ENCODE measurements at regions of chr11 and their contacts with region 1.

Region 1: DNA sequence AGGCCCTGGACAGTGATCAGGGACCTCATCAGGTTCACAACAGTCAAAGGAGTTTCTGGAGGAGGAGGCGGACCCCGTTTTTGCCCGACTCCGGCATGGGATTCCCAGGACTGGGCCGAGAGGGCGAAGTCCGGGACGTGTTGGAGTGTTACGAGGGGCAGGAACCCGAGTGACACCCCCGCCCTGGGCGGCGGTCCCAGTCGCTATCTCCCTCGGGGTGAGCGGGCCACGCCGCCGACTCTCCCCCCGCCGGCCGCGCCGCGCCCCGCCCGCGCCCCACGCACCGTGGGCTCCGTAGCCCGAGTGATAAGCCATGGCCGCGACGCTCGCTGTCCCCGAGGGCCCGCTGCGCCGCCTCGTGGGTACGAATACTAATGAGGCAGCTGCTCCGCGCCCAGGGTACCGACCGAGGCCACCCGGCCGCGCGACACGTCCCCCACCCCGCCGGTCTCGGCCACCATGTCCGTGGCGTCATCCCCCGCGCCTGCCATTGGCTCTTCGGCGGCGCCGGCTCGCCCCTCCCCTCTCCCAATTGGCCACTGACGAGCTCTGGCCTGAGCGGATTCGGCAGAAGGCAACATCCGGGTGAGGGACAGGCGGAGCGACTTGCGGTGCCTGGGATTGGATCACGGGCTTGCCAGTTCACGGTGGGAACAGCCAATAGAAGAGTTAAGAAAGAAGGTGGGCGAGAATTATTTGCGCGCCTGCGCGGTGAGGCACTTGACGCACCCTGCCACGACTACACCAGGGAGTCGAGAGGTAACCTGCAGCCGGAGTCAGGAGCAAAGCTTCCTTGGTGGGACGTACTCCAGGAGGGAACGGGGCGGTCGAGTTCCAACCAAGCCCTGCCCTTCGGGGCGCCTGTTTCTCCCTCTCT is at the start of gene YIF1A:
- DNase-seq: peak; percentile 99 to 100
- H3K4me3 ChIP-seq: peak within 1 kb of the TSS; percentile 63
- H3K4me3 Mint-ChIP-seq: peak within 1 kb of the TSS; percentile 87
- H3K27ac Mint-ChIP-seq: peak within 1 kb of the TSS; percentile 94
- H3K4me1 ChIP-seq: peaks cover 23% of the 10 kb centered on the region
- H3K4me1 Mint-ChIP-seq: peaks cover 22% of the 10 kb centered on the region
- H3K27me3 ChIP-seq: no peaks in the 10 kb centered on the region; the same call in 1 of the 2 replicates
- H3K27me3 Mint-ChIP-seq: peaks cover 6% of the 10 kb centered on the region
- CTCF ChIP-seq: peak in 1 of 2 experiments; percentile 25
- total RNA-seq, gene YIF1A: 140 and 159 TPM in 2 replicates

Region 2: GRCh38 chr11:66159324-66159984 is 129.5 kb before region 1 on chr11:
- CTCF ChIA-PET with region 1: interaction called, 10 read pairs
- POLR2A ChIA-PET with region 1: no interaction called
- intact Hi-C with region 1: no loop called
- DNase-seq: no peak
- H3K4me3 ChIP-seq: no peak overlapping the region
- H3K4me3 Mint-ChIP-seq: no peak overlapping the region
- H3K27ac Mint-ChIP-seq: no peak overlapping the region
- H3K4me1 ChIP-seq: peaks cover 51% of the 10 kb centered on the region
- H3K4me1 Mint-ChIP-seq: peaks cover 25% of the 10 kb centered on the region
- H3K27me3 ChIP-seq: no peaks in the 10 kb centered on the region
- H3K27me3 Mint-ChIP-seq: no peaks in the 10 kb centered on the region
- CTCF ChIP-seq: no peak

Region 3: DNA sequence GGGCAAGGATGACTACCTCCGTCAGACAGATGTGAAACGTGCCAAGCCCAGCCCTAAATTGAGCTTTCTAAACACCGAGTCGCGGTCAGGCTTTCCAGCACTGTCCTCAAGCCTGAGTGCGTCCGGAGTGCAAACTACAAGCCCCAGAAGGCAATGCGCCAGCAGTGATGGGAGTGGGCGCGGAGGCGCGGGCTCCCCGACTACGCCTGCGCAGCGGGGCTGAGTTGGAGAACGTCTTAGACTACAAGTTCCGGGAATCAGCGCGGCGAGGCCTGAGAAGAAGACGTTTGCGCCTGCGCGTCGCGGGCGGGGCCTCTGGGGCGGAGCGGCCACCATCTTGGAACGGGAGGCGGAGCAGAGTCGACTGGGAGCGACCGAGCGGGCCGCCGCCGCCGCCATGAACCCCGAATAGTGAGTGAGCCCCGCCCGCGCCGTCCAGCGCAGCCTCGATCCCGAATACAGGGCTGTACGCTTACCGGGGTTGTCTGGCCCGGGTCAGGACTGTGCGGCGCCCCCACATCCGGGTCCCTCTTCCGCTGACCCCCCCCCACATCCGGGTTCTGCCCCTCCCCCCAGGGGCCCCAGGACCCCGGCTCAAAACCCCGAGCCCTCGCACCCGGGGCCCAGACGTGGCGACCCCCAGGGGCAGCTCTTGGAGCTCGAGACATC is 20.5 kb before region 1 on chr11 and contains the start of gene RAB1B:
- CTCF ChIA-PET with region 1: interaction called, 9 read pairs
- POLR2A ChIA-PET with region 1: interaction called, 7 read pairs
- intact Hi-C with region 1: loop called (anchors 1 kb)
- DNase-seq: peak; percentile 100
- H3K4me3 ChIP-seq: peak within 1 kb of the TSS; percentile 78
- H3K4me3 Mint-ChIP-seq: peak within 1 kb of the TSS; percentile 92
- H3K27ac Mint-ChIP-seq: peak within 1 kb of the TSS; percentile 87
- H3K4me1 ChIP-seq: no peaks in the 10 kb centered on the region
- H3K4me1 Mint-ChIP-seq: peaks cover 8% of the 10 kb centered on the region
- H3K27me3 ChIP-seq: no peaks in the 10 kb centered on the region
- H3K27me3 Mint-ChIP-seq: no peaks in the 10 kb centered on the region
- CTCF ChIP-seq: no peak
- total RNA-seq, gene RAB1B: 128 and 132 TPM in 2 replicates

Region 4: DNA sequence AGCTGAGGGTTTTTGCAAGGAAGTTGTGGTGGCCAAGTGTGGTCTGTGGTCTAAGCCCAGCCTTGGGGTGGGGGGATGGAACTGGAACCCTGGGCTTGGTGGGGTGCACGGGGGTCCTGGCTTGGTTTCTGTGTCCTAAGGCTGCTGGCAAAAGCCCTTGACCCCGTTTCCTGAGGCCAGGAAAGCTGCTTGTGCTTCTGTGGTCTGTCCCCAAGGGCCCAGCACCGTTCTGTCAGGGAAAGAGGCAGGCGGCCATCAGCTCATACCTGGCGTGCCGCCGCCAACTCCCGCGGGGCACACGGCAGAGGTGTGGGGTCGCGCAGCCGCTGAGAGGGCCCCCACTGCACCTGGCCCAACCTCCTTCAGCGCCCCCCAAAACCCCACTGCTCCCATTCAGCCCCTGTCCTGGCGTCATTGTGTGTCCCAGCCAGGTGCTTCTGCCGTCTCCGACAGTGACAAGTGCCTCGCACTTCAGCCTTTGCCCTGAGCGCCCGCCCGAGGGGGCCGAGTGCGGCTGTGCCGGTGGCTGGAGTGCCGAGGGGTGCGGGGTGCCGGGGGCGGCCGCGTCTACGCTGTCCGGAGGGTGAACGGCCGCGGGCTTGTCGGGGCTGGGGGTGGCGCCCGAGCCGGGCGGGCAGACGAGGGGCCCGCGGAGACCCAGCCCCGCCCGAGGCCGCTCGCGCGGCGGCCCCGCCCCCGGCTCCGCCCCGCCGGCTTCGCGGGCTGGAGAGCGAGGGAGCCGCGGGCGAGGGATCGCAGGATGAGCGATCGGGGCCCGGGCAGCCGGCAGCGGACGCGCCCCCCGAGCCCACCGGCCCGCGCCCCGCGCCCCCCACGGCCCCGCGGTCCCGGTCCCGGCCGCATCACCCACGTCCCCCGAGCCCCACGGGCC is 11.2 kb before region 1 on chr11 and contains the start of gene CNIH2:
- CTCF ChIA-PET with region 1: interaction called, 3 read pairs
- POLR2A ChIA-PET with region 1: interaction called, 13 read pairs
- intact Hi-C with region 1: no loop called
- DNase-seq: peak; percentile 58 to 82
- H3K4me3 ChIP-seq: peak within 1 kb of the TSS; percentile 56
- H3K4me3 Mint-ChIP-seq: peak within 1 kb of the TSS; percentile 73
- H3K27ac Mint-ChIP-seq: peak within 1 kb of the TSS; percentile 43
- H3K4me1 ChIP-seq: peaks cover 11% of the 10 kb centered on the region
- H3K4me1 Mint-ChIP-seq: peaks cover 26% of the 10 kb centered on the region
- H3K27me3 ChIP-seq: no peaks in the 10 kb centered on the region
- H3K27me3 Mint-ChIP-seq: no peaks in the 10 kb centered on the region
- CTCF ChIP-seq: no peak
- total RNA-seq, gene CNIH2: 4.9 and 6.1 TPM in 2 replicates

Region 5: DNA sequence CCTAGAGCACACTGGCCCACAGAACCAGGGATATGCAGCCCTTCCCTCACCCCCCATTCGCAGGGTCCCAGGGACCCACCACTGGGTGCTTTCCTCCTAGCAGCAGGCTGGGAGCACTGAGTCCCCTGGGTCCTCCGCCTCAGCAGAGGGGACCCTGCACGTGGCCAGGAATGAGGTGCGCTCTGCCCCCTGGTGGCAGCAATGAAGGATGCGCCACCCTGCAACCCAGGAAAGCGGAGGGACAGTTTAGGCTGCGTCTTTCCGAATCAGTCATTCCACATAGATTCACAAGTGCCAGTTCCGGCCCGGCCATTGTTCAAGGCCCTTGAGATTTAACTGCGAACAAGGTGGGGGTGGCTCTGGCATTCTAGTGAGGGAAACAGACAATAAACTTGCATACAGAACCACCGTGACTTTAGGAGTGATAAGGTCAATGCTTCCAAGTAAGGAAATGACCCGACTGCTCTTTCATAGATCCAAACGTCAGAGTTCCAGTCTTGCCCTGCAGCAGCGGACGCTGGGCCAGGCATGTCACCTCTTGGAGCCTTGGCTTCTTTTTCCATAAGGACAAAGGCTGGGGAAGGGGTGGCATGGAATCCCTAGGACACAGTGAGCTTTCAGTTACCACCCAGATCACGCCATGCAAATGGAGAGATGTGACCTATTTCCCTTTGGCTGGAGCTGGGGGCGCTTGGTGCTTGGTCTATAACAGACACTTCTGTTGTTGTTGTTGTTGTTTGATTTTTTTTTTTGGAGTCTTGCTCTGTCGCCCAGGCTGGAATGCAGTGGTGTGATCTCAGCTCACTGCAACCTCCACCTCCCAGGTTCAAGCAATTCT is 39.6 kb after region 1 on chr11:
- CTCF ChIA-PET with region 1: interaction called, 3 read pairs
- POLR2A ChIA-PET with region 1: no interaction called
- intact Hi-C with region 1: loop called (anchors 2 kb)
- DNase-seq: peak; percentile 83 to 89
- H3K4me3 ChIP-seq: no peak overlapping the region
- H3K4me3 Mint-ChIP-seq: peak overlapping the region; percentile 32
- H3K27ac Mint-ChIP-seq: peak overlapping the region; percentile 15
- H3K4me1 ChIP-seq: peaks cover 41% of the 10 kb centered on the region
- H3K4me1 Mint-ChIP-seq: peaks cover 17% of the 10 kb centered on the region
- H3K27me3 ChIP-seq: no peaks in the 10 kb centered on the region
- H3K27me3 Mint-ChIP-seq: no peaks in the 10 kb centered on the region
- CTCF ChIP-seq: peak; percentile 95 to 97

Region 6: DNA sequence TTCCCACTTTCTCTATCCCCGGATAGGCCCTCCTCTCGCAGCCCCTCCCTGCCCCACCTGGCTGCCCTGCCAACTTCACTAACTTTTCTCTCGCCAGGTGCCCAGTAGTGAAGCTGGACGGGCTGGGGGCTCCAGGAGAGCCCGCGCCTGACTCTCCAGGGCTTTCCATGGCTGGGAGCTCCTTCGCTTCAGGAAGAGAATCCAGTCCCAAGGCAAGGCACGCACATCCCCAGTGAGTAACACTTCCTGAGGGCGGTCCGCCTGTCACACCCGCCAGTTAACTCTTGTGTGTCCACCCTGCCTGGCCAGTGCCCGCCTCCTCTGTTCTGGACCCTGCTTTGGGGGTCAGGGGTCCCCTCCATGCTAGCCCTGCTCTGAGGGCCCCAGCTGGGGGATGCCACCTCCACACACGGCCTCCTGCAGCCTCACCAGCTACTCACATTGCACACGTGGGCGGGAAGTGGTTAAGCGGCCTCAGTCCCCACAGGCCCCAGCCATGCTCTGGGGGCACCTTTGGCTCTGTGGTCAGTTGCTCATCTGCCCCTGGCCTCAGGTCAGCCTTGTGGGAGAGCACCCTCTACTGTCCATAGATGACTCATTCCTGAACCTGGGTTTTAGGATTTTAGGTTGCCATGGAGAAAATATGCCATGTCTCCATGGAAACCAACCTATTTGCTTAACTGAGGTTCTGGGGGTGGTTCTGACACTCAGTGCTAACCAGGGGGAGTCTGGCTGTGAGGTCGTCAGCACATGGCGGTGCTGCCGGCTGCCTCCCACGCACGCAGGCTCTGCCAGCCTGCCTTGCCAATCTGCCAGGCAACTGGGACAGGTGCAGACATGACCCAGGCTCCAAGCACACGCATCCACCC is 47.6 kb after region 1 on chr11 and contains the start of gene RIN1:
- CTCF ChIA-PET with region 1: interaction called, 8 read pairs
- POLR2A ChIA-PET with region 1: interaction called, 7 read pairs
- intact Hi-C with region 1: loop called (anchors 1 kb)
- DNase-seq: peak; percentile 87
- H3K4me3 ChIP-seq: peak within 1 kb of the TSS; percentile 69
- H3K4me3 Mint-ChIP-seq: peak within 1 kb of the TSS; percentile 94
- H3K27ac Mint-ChIP-seq: peak within 1 kb of the TSS; percentile 91
- H3K4me1 ChIP-seq: peaks cover 10% of the 10 kb centered on the region
- H3K4me1 Mint-ChIP-seq: peaks cover 7% of the 10 kb centered on the region
- H3K27me3 ChIP-seq: no peaks in the 10 kb centered on the region
- H3K27me3 Mint-ChIP-seq: no peaks in the 10 kb centered on the region
- CTCF ChIP-seq: peak; percentile 52 to 71
- total RNA-seq, gene RIN1: 11.7 and 12.7 TPM in 2 replicates

Region 7: DNA sequence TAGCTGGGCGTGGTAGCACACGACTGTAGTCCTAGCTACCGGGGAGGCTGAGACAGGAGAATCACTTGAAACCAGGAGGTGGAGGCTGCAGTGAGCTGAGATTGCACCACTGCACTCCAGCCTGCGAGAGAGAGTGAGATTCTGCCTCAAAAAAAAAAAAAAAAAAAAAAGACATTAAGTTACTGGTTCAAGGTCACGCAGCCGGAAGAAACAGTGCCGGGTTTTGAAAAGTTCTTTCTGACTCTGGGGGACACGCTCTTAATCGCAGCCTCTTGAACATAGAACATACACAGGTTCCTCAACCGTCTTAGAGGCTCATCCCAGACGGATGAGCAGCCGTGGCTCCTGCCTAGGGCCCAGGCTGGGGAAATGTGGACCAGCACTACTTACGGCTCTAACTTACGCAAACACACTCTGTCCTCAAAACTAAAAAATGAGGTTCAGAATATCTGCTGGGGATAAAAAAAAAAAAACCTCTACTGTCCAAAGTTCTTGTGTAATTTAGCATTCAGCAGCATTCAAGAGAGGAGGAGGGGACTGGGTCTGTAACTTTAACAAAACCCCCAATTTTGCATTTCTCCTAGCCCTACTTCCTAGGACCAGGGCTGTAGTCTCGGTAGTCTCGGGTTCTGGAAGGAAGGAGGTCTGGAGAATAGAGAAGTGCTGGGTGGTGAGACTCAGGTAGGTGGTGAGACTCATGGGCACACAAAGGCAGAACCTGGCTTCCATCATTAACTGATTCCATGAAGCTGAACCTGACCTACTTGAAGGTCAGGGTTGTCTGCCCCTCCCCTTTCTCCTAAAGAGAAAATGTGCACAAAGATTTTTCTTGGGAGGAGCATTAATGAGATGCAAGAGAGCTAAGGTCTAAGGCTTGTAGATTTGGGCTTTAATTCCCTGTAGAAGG is 434.1 kb after region 1 on chr11:
- CTCF ChIA-PET with region 1: no interaction called
- POLR2A ChIA-PET with region 1: no interaction called
- intact Hi-C with region 1: no loop called
- DNase-seq: no peak
- H3K4me3 ChIP-seq: no peak overlapping the region
- H3K4me3 Mint-ChIP-seq: no peak overlapping the region
- H3K27ac Mint-ChIP-seq: no peak overlapping the region
- H3K4me1 ChIP-seq: peaks cover 19% of the 10 kb centered on the region
- H3K4me1 Mint-ChIP-seq: peaks cover 39% of the 10 kb centered on the region
- H3K27me3 ChIP-seq: no peaks in the 10 kb centered on the region
- H3K27me3 Mint-ChIP-seq: no peaks in the 10 kb centered on the region
- CTCF ChIP-seq: no peak

Measured in Caco-2 (cell line).